PC-3 (cell line): ENCODE measurements at regions of chr2 and their contacts with region 1.

Region 1: DNA sequence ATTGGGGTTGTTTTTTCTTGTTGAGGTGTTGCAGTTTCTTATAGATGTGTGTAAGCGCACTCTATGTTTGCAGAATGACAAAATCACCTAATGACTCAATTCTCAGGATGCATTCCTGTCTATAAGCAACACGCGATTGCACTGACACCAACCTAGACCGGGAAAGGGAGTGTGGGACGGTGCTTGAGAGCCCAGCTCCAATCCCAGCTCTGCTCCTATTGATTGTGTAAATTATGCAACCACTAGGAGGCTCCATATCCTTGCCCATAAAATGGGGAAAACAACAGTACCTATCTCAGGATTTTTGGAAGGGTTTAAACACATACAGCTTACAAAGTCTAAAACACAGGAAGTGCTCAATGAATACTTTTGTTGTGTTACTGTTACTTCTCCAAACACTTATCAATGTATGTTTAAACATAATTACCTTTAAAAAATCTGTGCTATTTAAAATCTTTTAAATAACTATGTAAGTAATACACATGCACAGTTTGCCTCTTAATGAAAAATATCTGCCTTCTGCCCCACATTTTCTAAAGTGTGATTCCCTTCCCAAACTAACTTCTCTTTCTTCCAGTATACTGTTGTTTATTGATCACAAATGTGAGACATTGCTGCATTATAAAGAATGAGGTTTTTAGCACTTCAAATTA is 132.5 kb downstream of the SPHKAP start:
- DNase-seq: peak; percentile 95
- ATAC-seq: peak; percentile 99
- H3K4me3 ChIP-seq: no peak overlapping the region
- H3K27ac ChIP-seq: 0 out of 2 replicates have a peak overlapping the region, but pooled peaks have one; percentile 49
- H3K4me1 ChIP-seq: peaks cover 15% of the 10 kb centered on the region
- H3K27me3 ChIP-seq: no peaks in the 10 kb centered on the region
- CTCF ChIP-seq: peak; percentile 81

Region 2: DNA sequence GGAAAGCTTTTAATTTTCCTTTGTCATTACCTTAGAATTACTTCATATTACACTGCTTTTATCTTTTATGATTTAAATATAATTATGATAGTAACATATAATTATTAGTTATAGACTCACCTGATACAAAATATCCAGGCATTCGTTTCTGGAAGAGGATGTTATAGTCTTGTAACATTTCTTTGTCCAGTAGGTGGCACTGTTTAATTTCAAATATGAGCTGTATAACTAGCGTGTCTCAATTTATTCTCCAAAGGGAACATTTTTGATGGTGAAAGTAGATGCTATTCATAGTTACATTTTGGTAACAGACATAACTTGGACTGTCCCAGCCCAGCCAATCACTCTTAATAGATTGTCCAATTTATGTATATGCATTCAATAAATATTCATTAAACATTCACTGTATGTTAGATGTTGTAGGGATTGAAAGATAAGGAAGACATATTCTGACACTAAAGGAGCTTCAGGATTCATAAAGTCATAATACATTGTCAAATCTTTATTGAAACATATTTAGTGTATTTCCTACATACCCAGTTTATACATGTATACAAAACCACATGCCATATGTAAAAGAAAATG is 158.4 kb before region 1 on chr2:
- CTCF ChIA-PET with region 1: no interaction called
- POLR2A ChIA-PET with region 1: no interaction called
- intact Hi-C with region 1: loop called (anchors 5 kb)
- DNase-seq: peak; percentile 80
- ATAC-seq: peak; percentile 80
- H3K4me3 ChIP-seq: no peak overlapping the region
- H3K27ac ChIP-seq: no peak overlapping the region
- H3K4me1 ChIP-seq: peaks cover 6% of the 10 kb centered on the region; the same call in 1 of the 2 replicates
- H3K27me3 ChIP-seq: no peaks in the 10 kb centered on the region
- CTCF ChIP-seq: peak; percentile 66

Region 3: GRCh38 chr2:228401065-228401912 is 352.3 kb after region 1 on chr2:
- CTCF ChIA-PET with region 1: no interaction called
- POLR2A ChIA-PET with region 1: no interaction called
- intact Hi-C with region 1: loop called (anchors 10 kb)
- DNase-seq: peak; percentile 67
- ATAC-seq: peak; percentile 82
- H3K4me3 ChIP-seq: no peak overlapping the region
- H3K27ac ChIP-seq: no peak overlapping the region
- H3K4me1 ChIP-seq: no peaks in the 10 kb centered on the region
- H3K27me3 ChIP-seq: no peaks in the 10 kb centered on the region
- CTCF ChIP-seq: peak; percentile 87

Region 4: GRCh38 chr2:228545041-228545747 is 496.2 kb after region 1 on chr2:
- CTCF ChIA-PET with region 1: no interaction called
- POLR2A ChIA-PET with region 1: no interaction called
- intact Hi-C with region 1: loop called (anchors 10 kb)
- DNase-seq: peak; percentile 87
- ATAC-seq: peak; percentile 80
- H3K4me3 ChIP-seq: no peak overlapping the region
- H3K27ac ChIP-seq: peak overlapping the region; percentile 57
- H3K4me1 ChIP-seq: peaks cover 49% of the 10 kb centered on the region
- H3K27me3 ChIP-seq: no peaks in the 10 kb centered on the region
- CTCF ChIP-seq: no peak